Activated naive CD4-positive, alpha-beta T cell treated with anti-CD3 and anti-CD28 coated beads for 36 hours (primary cell): ENCODE measurements at regions of chr1 and their contacts with region 1.

Region 1: DNA sequence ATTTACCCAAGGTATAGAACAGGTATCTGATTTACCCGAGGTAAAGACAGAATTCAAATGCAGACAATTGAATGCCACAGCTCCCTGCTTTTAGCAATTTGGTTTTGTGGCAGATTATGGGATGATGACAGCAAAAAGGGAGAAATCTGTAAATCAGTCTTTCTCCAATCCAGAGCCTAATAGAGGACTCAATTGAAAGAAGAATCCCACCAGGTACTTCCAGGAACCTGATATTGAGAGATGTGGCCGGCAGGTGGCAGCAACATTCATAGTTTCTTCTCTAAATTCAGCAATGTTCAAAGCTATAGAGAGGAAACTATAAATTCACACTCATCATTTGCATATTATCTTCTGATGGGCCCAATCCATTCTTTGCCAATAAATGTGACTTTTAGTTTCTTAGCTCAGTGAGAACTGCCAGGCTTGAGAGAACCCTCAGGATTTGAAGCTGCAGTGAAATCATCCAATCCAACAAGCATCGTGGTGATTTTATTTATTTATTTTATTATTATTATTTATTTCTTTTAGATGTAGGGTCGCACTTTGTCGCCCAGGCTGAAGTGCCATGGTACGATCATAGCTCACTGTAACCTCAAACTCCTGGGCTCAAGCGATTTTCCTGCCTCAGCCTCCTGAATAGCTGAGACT is 9.8 kb upstream of the PHACTR4 start:
- DNase-seq: peak; percentile 90
- H3K4me3 Mint-ChIP-seq: no peak overlapping the region
- H3K27ac Mint-ChIP-seq: no peak overlapping the region
- H3K4me1 Mint-ChIP-seq: peaks cover 2% of the 10 kb centered on the region
- H3K27me3 Mint-ChIP-seq: no peaks in the 10 kb centered on the region

Region 2: DNA sequence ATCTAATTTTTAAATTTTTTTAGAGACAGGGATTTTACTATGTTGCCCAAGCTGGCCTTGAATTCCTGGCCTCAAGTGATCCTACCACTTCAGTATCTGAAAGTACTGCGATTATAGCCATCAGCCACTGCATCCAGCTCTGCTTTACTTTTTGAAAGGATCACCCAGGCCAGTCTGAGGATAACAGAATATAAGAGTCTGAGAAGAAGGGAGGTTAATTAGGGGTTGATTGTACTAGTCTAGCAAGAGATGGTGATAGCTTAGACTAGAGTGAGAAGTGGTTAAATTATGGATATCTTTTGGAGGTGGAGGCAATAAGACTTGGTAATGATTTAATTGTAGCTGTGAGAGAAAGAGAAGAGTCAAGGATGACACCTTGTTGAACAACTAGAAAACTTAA is 42.0 kb after region 1 on chr1:
- CTCF ChIA-PET with region 1: no interaction called
- intact Hi-C with region 1: no loop called
- DNase-seq: no peak
- H3K4me3 Mint-ChIP-seq: no peak overlapping the region
- H3K27ac Mint-ChIP-seq: no peak overlapping the region
- H3K4me1 Mint-ChIP-seq: peaks cover 3% of the 10 kb centered on the region
- H3K27me3 Mint-ChIP-seq: no peaks in the 10 kb centered on the region

Region 3: DNA sequence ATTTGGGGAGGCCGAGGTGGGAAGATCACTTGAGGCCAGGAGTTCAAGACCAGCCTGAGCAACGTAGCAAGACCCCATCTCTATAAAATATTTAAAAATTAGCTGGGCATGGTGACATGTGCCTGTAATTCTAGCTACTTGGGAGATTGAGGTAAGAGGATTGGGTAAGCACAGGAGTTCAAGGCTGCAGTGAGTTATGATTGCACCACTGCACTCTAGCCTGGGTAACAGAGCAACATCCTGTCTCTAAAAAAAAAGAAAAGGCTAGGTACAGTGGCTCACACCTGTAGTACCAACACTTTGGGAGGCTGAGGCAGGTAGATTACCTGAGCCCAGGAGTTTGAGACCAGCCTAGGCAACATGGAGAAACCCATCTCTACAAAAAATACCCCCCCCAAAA is 110.4 kb after region 1 on chr1:
- CTCF ChIA-PET with region 1: interaction called, 4 read pairs
- intact Hi-C with region 1: loop called (anchors 2 kb)
- DNase-seq: no peak
- H3K4me3 Mint-ChIP-seq: no peak overlapping the region
- H3K27ac Mint-ChIP-seq: no peak overlapping the region
- H3K4me1 Mint-ChIP-seq: peaks cover 2% of the 10 kb centered on the region
- H3K27me3 Mint-ChIP-seq: no peaks in the 10 kb centered on the region

Region 4: DNA sequence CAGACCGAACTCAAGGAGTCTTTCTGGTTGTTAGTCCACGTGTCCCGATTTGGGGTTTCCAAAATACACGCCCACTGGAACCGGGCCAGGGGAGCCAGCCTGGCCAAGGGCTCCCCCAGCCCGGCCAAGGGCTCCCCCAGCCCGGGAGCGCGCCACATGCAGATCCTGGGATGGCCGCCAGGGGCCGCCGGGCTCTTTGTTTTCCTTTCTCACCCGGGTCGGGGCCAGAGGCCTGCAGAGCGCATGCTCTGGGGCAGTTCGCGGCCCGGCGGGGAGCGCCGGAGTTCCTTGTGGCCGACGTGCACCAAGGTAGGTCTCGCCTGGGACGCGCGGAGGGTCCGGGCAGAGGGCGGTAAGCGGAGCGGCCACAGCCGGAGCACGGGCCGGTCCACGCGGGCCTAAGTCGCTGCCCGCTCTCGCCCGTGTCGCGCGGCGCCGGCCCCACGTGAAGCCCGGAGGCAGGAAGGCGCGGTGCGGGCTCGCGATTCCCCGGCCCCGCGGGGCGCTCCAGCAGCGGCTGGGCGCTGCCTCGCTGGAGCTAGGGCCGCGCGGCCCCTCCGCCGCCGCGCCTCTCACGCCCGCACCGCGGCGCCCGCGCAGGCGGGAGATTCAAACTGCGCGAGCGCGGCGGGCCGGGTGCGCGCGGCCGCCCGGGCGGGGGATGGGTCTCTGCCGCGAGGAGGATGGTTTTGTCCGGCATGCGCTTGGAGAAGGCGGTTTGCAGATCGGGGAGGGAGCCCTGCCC is 158.5 kb after region 1 on chr1:
- CTCF ChIA-PET with region 1: no interaction called
- intact Hi-C with region 1: loop called (anchors 1 kb)
- DNase-seq: peak; percentile 92
- H3K4me3 Mint-ChIP-seq: peak overlapping the region; percentile 90
- H3K27ac Mint-ChIP-seq: peak overlapping the region; percentile 91
- H3K4me1 Mint-ChIP-seq: peaks cover 38% of the 10 kb centered on the region
- H3K27me3 Mint-ChIP-seq: no peaks in the 10 kb centered on the region

Region 5: DNA sequence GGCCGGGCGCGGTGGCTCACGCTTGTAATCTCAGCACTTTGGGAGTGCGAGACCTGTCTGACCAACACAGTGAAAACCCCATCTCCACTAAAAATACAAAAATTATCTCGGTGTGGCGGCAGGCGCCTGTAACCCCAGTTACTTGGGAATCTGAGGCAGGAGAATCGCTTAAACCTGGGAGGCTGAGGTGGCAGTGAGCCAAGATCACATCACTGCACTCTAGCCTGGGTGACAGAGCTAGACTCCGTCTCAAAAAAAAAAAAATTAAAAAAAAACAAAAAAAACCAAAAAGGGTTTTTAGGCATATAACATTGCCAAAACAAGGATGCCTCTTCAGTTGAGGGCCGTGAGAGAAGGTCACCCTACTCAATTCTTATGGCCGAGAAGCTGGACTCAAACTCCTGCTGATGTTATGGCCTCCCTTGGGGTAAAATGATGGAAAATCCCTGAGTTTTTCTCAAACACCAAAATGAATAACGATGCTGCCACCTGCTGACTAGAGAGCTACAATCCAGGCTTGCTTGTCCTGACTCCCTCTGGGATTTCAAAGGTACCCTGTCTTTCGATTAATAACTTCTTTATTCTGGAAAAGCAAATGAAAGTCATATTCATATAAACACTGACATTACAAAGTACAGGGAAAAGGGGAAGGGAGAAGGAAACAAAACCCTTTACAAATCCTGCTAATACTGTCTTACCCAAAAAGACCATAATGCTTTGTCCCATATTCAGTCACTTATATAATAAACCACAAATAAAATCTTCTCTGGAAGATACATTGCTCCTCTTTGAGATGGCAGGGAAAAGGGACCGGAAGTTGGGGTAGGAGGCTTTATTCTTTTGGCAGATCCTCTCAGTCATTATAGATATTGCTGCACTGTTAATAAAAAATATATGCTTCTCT is 243.1 kb after region 1 on chr1:
- CTCF ChIA-PET with region 1: interaction called, 7 read pairs
- intact Hi-C with region 1: loop called (anchors 2 kb)
- DNase-seq: peak; percentile 69
- H3K4me3 Mint-ChIP-seq: no peak overlapping the region
- H3K27ac Mint-ChIP-seq: peak overlapping the region; percentile 24
- H3K4me1 Mint-ChIP-seq: no peaks in the 10 kb centered on the region
- H3K27me3 Mint-ChIP-seq: no peaks in the 10 kb centered on the region

Region 6: GRCh38 chr1:28656335-28656734 is 296.6 kb after region 1 on chr1:
- CTCF ChIA-PET with region 1: no interaction called
- intact Hi-C with region 1: loop called (anchors 1 kb)
- DNase-seq: no peak
- H3K4me3 Mint-ChIP-seq: no peak overlapping the region
- H3K27ac Mint-ChIP-seq: no peak overlapping the region
- H3K4me1 Mint-ChIP-seq: no peaks in the 10 kb centered on the region
- H3K27me3 Mint-ChIP-seq: no peaks in the 10 kb centered on the region